HAP-1 (cell line): ENCODE measurements at regions of chr15 and their contacts with region 1.

Region 1: DNA sequence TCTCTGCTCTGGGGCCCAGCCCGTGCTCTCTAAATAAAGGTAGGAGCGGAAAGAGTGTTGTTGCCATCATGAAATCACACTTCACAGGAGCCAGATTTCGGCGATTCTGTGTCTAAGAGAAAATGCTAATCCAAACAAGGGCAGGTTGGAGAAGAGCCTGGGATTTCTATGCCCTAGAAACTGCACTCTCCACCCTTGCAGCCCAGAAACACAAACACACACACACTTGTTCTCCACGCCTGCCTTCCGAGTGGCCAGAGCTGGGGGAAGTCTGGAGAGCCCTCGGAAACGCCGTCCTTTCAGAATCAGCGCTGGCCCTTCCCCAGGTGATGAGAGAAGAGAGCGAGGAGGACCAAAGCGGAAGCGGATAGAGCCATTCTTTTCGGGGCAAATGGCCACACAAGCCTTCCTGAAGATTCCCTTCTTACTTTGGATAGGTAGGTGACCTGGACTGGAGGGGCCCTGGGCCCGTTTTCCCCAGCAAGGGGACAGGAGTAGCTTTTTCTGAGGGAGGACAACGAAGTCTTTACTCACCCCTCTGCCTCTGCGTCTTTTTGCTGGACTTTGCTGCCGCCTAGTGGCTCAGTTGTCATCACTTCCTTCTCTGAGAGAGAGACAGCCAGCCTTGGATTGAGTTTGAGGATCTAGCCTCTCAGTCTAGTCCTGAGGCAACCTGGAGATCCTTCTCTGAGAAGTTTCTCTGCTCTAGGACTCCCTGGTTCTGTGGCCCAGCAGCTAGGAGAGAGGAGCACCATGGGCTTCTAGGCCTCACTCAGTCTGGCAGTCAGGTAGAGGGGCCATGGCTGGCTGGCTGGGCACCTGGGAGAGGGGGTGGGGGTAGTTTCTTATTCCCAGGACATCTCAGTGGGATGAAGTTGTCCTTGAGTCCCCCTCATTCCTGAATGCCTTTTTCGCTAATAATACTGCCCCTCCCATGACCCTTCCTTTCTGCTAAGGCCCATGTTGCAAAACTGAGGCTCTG is 37.7 kb downstream of the SENP8 start:
- DNase-seq: peak; percentile 93 to 97
- H3K4me3 ChIP-seq: no peak overlapping the region
- H3K4me1 ChIP-seq: peaks cover 3% of the 10 kb centered on the region; the same call in 1 of the 2 replicates
- H3K27me3 ChIP-seq: 0 out of 2 replicates have a peak, but pooled peaks cover 4% of the 10 kb centered on the region

Region 2: DNA sequence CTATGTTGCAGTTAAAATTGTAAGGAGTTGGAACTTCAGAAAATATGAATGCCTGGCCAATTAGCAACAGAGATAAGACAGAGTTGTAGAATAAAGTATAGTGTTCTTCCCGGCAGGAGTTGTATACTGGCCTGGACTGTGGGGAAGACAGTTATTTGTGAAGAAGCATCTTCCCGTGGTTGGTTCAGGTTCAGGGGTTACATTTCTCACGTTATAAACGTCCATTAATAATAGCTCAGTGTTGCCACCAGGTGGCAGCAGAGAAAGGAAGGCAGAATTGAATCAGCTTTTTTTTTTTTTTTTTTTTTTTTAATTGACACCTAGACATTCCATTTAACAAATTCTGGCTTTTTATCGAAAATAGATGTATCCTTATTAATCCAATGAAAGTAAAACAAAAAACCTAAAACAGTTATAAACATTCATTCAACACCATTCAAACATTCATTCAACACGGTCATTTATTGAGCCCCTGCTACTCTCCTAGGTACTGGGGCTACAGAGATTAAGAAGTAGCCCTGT is 412.0 kb before region 1 on chr15:
- in situ Hi-C with region 1: loop called (anchors 5 kb)
- DNase-seq: peak; percentile 83 to 87
- H3K4me3 ChIP-seq: no peak overlapping the region
- H3K4me1 ChIP-seq: no peaks in the 10 kb centered on the region
- H3K27me3 ChIP-seq: no peaks in the 10 kb centered on the region

Region 3: GRCh38 chr15:71806452-71806931 is 349.4 kb before region 1 on chr15:
- in situ Hi-C with region 1: loop called (anchors 5 kb)
- DNase-seq: no peak
- H3K4me3 ChIP-seq: no peak overlapping the region
- H3K4me1 ChIP-seq: no peaks in the 10 kb centered on the region; the same call in 1 of the 2 replicates
- H3K27me3 ChIP-seq: no peaks in the 10 kb centered on the region